ENCODE measurements at regions of chr17 and their contacts with region 1.

Region 1: GRCh38 chr17:35764123-35764991 is 3.7 kb downstream of the C17orf50 start:
- DNase-seq: peak; percentile 92
- ATAC-seq: peak; percentile 91
- H3K4me3 ChIP-seq: peak overlapping the region; percentile 21 to 88 (median 72)
- H3K4me3 Mint-ChIP-seq: peak overlapping the region; percentile 94
- H3K27ac ChIP-seq: peak overlapping the region; percentile 15 to 30
- H3K27ac Mint-ChIP-seq: peak overlapping the region; percentile 89
- H3K4me1 ChIP-seq: peaks cover 7 to 13% of the 10 kb centered on the region in 2 donors
- H3K4me1 Mint-ChIP-seq: peaks cover 8% of the 10 kb centered on the region
- H3K27me3 ChIP-seq: no peaks in the 10 kb centered on the region
- H3K27me3 Mint-ChIP-seq: no peaks in the 10 kb centered on the region
- CTCF ChIP-seq: peak; percentile 77

Region 2: GRCh38 chr17:35747540-35748017 is 16.8 kb before region 1 on chr17:
- CTCF ChIA-PET with region 1: interaction called, 12 read pairs
- POLR2A ChIA-PET with region 1: no interaction called
- intact Hi-C with region 1: no loop called
- DNase-seq: peak; percentile 84
- ATAC-seq: peak; percentile 92
- H3K4me3 ChIP-seq: no peak overlapping the region
- H3K4me3 Mint-ChIP-seq: no peak overlapping the region
- H3K27ac ChIP-seq: no peak overlapping the region
- H3K27ac Mint-ChIP-seq: no peak overlapping the region
- H3K4me1 ChIP-seq: peaks cover 3 to 10% of the 10 kb centered on the region in 2 donors
- H3K4me1 Mint-ChIP-seq: peaks cover 6% of the 10 kb centered on the region
- H3K27me3 ChIP-seq: peaks cover 0 to 51% (median 23%) of the 10 kb centered on the region in 4 experiments
- H3K27me3 Mint-ChIP-seq: peaks cover 51% of the 10 kb centered on the region
- CTCF ChIP-seq: peak; percentile 88

Region 3: GRCh38 chr17:35788504-35789368 is 24.4 kb after region 1 on chr17:
- CTCF ChIA-PET with region 1: interaction called, 62 read pairs
- POLR2A ChIA-PET with region 1: interaction called, 3 read pairs
- intact Hi-C with region 1: no loop called
- DNase-seq: no peak
- ATAC-seq: no peak
- H3K4me3 ChIP-seq: no peak overlapping the region
- H3K4me3 Mint-ChIP-seq: no peak overlapping the region
- H3K27ac ChIP-seq: no peak overlapping the region
- H3K27ac Mint-ChIP-seq: no peak overlapping the region
- H3K4me1 ChIP-seq: no peaks in the 10 kb centered on the region
- H3K4me1 Mint-ChIP-seq: no peaks in the 10 kb centered on the region
- H3K27me3 ChIP-seq: peaks cover 0 to 27% (median 9%) of the 10 kb centered on the region in 4 experiments
- H3K27me3 Mint-ChIP-seq: peaks cover 35% of the 10 kb centered on the region
- CTCF ChIP-seq: no peak

Region 4: GRCh38 chr17:35801583-35802224 is 37.3 kb after region 1 on chr17:
- CTCF ChIA-PET with region 1: interaction called, 349 read pairs
- POLR2A ChIA-PET with region 1: interaction called, 8 read pairs
- intact Hi-C with region 1: loop called (anchors 1 kb)
- DNase-seq: peak; percentile 53
- ATAC-seq: peak; percentile 67
- H3K4me3 ChIP-seq: peak overlapping the region in 1 of 5 experiments; percentile 9
- H3K4me3 Mint-ChIP-seq: peak overlapping the region; percentile 64
- H3K27ac ChIP-seq: peak overlapping the region; percentile 49 to 83
- H3K27ac Mint-ChIP-seq: peak overlapping the region; percentile 92
- H3K4me1 ChIP-seq: peaks cover 19 to 21% of the 10 kb centered on the region in 2 donors
- H3K4me1 Mint-ChIP-seq: peaks cover 21% of the 10 kb centered on the region
- H3K27me3 ChIP-seq: peaks cover 0 to 17% (median 5%) of the 10 kb centered on the region in 4 experiments
- H3K27me3 Mint-ChIP-seq: no peaks in the 10 kb centered on the region
- CTCF ChIP-seq: no peak

Region 5: DNA sequence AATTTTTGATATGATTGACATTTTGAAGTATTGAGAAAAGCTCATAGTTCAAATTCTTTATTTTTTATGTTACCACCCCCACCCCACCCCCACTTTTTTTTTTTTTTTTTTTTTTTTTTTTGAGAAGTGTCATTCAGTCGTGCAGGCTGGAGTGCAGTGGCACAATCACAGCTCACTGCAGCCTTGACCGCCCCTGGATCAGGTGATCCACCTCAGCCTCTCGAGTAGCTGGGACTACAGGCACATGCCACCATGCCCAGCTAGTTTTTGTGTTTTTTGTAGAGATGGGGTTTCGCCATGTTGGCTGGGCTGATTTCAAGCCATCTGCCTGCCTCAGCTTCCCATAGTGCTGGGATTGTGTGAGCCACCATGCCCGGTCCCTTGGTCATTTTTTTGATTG is 52.4 kb after region 1 on chr17:
- CTCF ChIA-PET with region 1: interaction called, 349 read pairs
- POLR2A ChIA-PET with region 1: no interaction called
- intact Hi-C with region 1: no loop called
- DNase-seq: no peak
- ATAC-seq: no peak
- H3K4me3 ChIP-seq: no peak overlapping the region
- H3K4me3 Mint-ChIP-seq: no peak overlapping the region
- H3K27ac ChIP-seq: no peak overlapping the region
- H3K27ac Mint-ChIP-seq: no peak overlapping the region
- H3K4me1 ChIP-seq: peaks cover 3 to 5% of the 10 kb centered on the region in 2 donors
- H3K4me1 Mint-ChIP-seq: peaks cover 35% of the 10 kb centered on the region
- H3K27me3 ChIP-seq: no peaks in the 10 kb centered on the region
- H3K27me3 Mint-ChIP-seq: no peaks in the 10 kb centered on the region
- CTCF ChIP-seq: no peak

Measured in B cell (primary cell).